Activated naive CD4-positive, alpha-beta T cell treated with anti-CD3 and anti-CD28 coated beads for 36 hours (primary cell): ENCODE measurements at regions of chr1 and their contacts with region 1.

Region 1: DNA sequence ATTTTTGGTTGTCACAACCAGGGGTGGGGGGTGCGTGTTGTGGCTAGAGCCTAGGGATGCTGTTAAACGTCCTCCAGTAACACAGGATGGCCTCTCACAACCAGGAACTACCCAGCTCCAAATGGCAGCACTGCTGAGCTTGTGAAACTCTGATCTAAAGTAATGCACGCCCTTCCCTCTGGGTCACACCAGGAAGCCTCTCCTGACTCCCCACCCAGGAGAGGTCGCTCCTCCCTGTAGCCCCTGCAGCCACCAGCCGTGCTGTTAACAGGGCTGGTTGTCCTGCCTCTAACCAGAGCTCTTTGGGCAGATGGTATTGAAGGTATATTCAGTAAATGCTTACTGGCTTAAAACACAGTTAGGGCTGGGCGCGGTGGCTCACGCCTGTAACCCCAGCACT is 73.2 kb downstream of the NKAIN1 start:
- DNase-seq: no peak
- H3K4me3 Mint-ChIP-seq: no peak overlapping the region
- H3K27ac Mint-ChIP-seq: no peak overlapping the region
- H3K4me1 Mint-ChIP-seq: peaks cover 5% of the 10 kb centered on the region
- H3K27me3 Mint-ChIP-seq: peaks cover 2% of the 10 kb centered on the region

Region 2: GRCh38 chr1:31127266-31127665 is 39.2 kb before region 1 on chr1:
- CTCF ChIA-PET with region 1: no interaction called
- intact Hi-C with region 1: no loop called
- DNase-seq: no peak
- H3K4me3 Mint-ChIP-seq: no peak overlapping the region
- H3K27ac Mint-ChIP-seq: no peak overlapping the region
- H3K4me1 Mint-ChIP-seq: no peaks in the 10 kb centered on the region
- H3K27me3 Mint-ChIP-seq: no peaks in the 10 kb centered on the region

Region 3: GRCh38 chr1:31335007-31335406 is 168.5 kb after region 1 on chr1:
- CTCF ChIA-PET with region 1: no interaction called
- intact Hi-C with region 1: loop called (anchors 2 kb)
- DNase-seq: no peak
- H3K4me3 Mint-ChIP-seq: no peak overlapping the region
- H3K27ac Mint-ChIP-seq: no peak overlapping the region
- H3K4me1 Mint-ChIP-seq: peaks cover 2% of the 10 kb centered on the region
- H3K27me3 Mint-ChIP-seq: no peaks in the 10 kb centered on the region